ENCODE measurements at regions of chr2 and their contacts with region 1.

Region 1: GRCh38 chr2:222707689-222708525 is 36.4 kb downstream of the MOGAT1 start:
- DNase-seq: peak in 1 of 2 experiments; percentile 87
- H3K4me3 ChIP-seq: no peak overlapping the region
- H3K27ac ChIP-seq: no peak overlapping the region
- H3K4me1 ChIP-seq: peaks cover 0 to 6% (median 0%) of the 10 kb centered on the region in 4 experiments; a peak in 3 of 7 replicates
- H3K27me3 ChIP-seq: no peaks in the 10 kb centered on the region
- CTCF ChIP-seq: peak; percentile 68 to 81 (median 73)
- EP300 ChIP-seq: no peak
- POLR2A ChIP-seq: no peak
- RAD21 ChIP-seq: peak; percentile 75 to 77

Region 2: DNA sequence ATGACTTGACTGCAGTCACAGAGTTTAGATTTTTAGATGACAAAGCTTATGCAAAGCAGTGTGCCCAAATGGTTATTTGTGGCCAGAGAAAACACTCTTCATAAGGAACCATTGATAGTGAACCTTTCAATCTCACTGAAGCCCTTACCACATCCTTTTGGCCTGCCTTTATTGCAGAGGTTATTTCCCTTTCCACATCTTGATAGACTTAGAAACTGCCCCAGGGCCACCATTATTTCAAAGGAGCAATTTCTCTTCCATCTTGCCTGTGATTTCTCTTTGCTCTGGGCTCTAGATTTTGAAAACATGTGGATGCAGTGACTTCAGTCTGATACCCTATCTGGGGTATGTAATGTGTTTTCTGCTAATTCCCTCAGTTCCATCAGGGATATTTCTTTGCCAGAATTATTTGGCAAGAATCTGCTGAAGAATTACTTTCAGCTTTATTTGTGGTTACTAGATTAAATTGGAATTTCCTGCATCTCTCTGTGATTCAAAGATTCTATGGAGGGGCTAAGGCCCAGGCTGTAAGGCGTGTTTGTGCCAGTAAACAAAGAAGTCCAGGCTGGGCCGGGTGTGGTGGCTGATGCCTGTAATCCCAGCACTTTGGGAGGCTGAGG is 14.5 kb after region 1 on chr2:
- CTCF ChIA-PET with region 1: interaction called, 15 read pairs
- POLR2A ChIA-PET with region 1: no interaction called
- DNase-seq: no peak
- H3K4me3 ChIP-seq: no peak overlapping the region
- H3K27ac ChIP-seq: no peak overlapping the region
- H3K4me1 ChIP-seq: no peaks in the 10 kb centered on the region
- H3K27me3 ChIP-seq: no peaks in the 10 kb centered on the region
- CTCF ChIP-seq: no peak
- EP300 ChIP-seq: no peak
- POLR2A ChIP-seq: no peak
- RAD21 ChIP-seq: no peak

Region 3: DNA sequence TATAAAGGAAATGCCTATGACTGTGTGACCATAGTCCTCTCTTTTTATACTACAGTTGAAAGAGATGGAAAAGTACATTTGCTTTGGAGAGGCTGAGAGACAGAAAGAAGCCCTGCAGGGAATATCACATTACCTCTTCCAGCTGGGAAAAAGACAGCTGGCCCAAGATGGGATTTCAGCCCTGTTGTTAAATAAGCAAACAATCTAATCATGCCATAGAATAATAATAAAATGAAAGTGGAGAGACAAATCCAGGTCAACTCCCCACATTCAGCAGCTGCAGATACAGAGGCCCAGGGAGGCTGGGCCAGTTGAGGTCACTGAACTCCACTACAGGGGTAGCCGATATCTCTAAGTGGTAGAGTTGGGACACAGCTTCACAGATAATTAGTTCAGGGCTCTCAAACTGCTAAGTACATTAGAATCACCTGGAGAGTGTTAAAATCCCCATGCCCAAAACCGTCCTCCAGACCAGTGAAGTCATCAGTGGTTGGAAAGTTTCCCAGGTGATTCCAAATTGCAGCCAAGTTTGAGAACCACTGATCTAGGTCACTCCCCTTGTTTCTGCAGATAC is 45.4 kb after region 1 on chr2:
- CTCF ChIA-PET with region 1: interaction called, 10 read pairs
- POLR2A ChIA-PET with region 1: no interaction called
- DNase-seq: no peak
- H3K4me3 ChIP-seq: no peak overlapping the region
- H3K27ac ChIP-seq: no peak overlapping the region
- H3K4me1 ChIP-seq: peaks cover 0 to 8% (median 2%) of the 10 kb centered on the region in 4 experiments; a peak in 3 of 7 replicates
- H3K27me3 ChIP-seq: no peaks in the 10 kb centered on the region; a peak in 2 of 7 replicates
- CTCF ChIP-seq: no peak
- EP300 ChIP-seq: no peak
- POLR2A ChIP-seq: no peak
- RAD21 ChIP-seq: no peak

Region 4: DNA sequence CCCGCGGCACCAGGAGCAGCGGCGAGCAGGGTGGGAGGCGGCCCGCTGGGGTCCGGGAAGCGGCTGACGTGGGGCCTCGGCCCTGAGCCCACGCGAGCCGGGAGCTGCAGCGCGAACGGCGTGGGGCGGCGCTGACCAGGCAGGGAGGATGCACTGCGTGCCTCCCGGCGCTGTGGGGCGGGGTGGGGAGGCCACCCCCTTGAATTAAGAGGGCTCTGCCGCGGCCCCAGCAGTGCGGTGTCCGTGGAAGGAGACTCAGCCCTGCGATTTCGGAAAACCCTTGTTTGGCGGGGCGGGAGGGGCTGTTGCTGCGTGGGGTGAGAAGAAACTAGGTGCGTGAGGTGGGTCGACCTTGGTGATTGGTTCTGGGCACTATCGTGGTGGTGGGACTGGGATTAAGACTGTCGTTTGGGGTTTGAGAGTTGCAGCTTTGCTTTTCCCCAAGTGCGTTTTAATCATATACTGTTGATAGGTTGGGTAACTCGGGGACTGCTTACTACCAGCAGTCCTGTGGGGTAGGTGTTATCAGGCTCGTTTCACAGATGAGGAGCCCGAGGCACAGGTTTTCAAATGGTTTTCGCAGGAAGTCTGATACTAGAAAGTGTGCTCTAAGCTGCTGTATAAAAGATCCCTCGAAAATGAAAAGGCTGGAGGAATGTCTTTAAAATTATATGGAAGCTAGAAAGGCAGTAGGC is 153.7 kb after region 1 on chr2:
- CTCF ChIA-PET with region 1: interaction called, 14 read pairs
- POLR2A ChIA-PET with region 1: interaction called, 3 read pairs
- DNase-seq: no peak
- H3K4me3 ChIP-seq: peak overlapping the region; percentile 77 to 97 (median 83)
- H3K27ac ChIP-seq: peak overlapping the region; percentile 94
- H3K4me1 ChIP-seq: peaks cover 12 to 20% (median 16%) of the 10 kb centered on the region in 4 experiments; a peak in 6 of 7 replicates
- H3K27me3 ChIP-seq: no peaks in the 10 kb centered on the region
- CTCF ChIP-seq: no peak
- EP300 ChIP-seq: no peak
- POLR2A ChIP-seq: no peak
- RAD21 ChIP-seq: no peak

Region 5: DNA sequence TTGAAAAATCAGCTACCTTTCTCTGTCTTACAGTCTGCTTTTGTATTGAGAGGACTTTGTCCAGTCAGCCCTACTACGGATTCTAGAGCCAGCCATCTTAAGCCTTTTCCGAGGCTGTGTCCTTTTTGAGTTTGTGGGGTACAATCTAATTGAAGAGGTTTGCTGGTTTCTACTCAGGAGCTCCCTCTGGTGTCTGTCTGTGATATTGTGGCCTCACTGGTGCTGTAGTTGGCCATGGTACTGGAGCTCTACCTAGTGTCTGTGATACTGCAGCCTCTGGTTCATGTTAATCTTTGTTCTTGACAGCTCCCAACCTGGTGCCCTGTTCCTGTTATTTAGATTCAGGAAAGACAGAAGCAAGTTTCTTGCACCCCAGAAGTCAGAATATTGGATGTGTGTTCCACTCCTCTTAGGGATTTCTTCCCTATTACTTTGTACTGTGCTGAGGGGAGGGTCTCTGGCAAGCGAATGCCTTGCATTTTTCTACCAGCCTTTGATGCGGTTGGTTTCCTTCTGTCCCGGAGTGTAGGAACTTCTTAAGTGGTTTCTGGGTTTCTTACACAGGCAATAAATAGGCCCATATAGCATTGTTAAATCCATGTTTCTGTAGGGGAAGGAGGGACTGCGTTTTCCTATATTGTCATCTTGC is 231.4 kb after region 1 on chr2:
- CTCF ChIA-PET with region 1: interaction called, 18 read pairs
- POLR2A ChIA-PET with region 1: no interaction called
- DNase-seq: peak; percentile 59 to 94
- H3K4me3 ChIP-seq: no peak overlapping the region
- H3K27ac ChIP-seq: no peak overlapping the region
- H3K4me1 ChIP-seq: peaks cover 0 to 6% (median 1%) of the 10 kb centered on the region in 4 experiments; a peak in 3 of 7 replicates
- H3K27me3 ChIP-seq: no peaks in the 10 kb centered on the region
- CTCF ChIP-seq: peak; percentile 56 to 99 (median 96)
- EP300 ChIP-seq: no peak
- POLR2A ChIP-seq: no peak
- RAD21 ChIP-seq: peak; percentile 84 to 86